Head of caudate nucleus (tissue), 42 donors: ENCODE measurements at regions of chr12 and their contacts with region 1.

Region 1: DNA sequence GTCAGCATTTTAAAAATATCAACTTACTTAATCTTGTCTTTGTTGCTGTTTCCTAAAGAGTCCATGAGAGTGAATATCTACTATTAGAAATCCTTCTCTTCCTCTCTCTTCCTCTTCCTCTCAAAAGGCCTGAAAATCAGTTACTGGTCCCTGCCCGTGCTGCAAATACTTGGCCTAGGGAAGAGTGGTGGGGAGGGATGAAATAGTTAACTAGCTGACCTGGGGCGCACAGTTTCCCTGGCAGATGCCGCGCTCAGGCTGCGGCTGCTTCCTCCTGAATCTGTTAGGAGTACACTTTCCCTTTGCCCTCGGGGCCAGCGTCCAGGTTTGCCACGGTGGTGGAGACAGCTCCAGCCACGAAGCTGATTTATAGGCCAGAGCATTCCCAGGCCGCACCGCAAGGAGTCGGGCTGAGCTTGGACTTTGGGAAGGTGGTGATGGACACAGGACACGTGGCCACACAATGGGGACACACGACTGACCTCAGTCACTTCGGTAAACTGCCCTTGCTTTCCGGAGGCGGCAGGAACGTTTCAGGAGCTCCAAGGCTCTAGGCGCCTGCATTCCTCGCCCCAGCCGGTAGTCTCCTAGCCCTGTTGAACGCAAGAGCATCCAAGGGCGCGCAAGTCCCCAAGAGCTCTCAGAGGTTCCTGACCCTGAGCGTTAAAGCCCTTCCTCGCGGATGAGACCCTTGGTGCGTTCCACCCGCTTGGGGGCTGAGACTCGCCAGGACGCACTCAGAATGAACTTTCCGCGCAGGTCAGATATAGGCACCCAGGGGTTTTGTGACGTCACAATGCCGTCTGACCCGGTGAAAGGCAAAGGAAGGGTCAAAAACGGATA is 7.1 kb upstream of the ASCL1 start:
- DNase-seq: peak in 23 of 42 donors; percentile 3 to 60 (median 34)

Region 2: DNA sequence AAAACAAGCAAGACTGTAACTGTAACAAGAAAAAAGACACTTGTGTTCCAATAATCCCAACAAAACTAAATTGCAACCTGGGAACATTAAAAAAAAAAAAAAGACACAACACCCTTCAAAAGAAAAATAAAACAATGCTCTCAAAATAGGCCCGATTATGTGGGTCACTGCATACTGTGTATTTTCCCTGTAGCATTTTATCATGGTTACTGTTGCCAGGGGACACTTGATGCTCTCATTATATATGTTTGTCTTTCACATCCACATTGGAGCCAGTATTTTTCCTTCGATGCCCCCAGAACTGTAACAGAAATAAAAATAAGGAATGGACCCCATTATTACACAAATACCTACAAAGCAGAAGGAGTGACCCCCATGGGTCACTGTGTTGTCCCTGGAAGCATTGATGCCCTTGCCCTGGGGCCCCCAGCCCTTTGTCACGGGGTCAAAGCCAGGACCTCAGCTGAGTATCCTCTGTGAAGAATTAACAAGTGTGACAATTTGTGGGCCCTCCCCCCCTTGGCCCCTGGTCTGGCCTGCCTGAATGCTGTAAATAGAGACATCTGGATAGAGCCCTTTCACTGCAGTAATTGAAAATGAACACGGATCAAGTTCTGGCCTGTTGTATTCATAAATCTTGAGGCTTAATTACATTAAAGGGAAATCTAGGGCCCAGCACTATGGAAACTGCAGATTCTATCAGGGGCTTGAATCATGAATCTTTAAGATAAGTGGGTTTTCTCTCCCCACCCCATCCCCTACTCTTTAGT is 472.6 kb after region 1 on chr12:
- intact Hi-C with region 1: no loop called
- DNase-seq: no peak

Region 3: GRCh38 chr12:103548622-103549601 is 598.6 kb after region 1 on chr12:
- intact Hi-C with region 1: loop called (anchors 5 kb)
- DNase-seq: peak; percentile 30 to 90 (median 78)